ENCODE measurements at regions of chr12 and their contacts with region 1.

Region 1: DNA sequence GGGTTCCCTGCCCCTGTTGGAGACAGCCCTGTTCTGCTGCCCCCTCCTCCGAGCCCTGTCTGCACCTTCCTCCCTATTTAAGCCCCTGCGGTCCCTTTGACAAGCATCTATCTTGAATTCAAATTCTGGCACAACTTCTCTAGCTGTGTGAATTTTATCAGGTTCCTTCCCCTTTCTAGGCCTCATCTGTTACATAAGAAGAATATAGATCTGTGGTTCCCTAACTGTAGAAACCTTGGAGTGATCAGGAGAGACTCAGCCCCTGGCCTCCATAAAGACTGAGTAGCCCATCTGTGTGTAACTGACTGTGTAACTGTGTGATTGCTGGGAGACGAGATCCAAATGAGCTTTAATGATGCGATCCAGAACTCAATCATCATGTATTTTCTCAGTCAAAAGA is 13.0 kb upstream of the RACGAP1 start:
- DNase-seq: no peak
- H3K4me3 ChIP-seq: no peak overlapping the region
- H3K27ac ChIP-seq: no peak overlapping the region
- H3K4me1 ChIP-seq: peaks cover 0 to 16% (median 5%) of the 10 kb centered on the region in 4 experiments
- H3K27me3 ChIP-seq: peaks cover 0 to 5% (median 0%) of the 10 kb centered on the region in 5 experiments

Region 2: GRCh38 chr12:49866859-49867579 is 171.3 kb before region 1 on chr12:
- CTCF ChIA-PET with region 1: interaction called, 15 read pairs
- POLR2A ChIA-PET with region 1: no interaction called
- DNase-seq: peak; percentile 46 to 72 (median 67)
- H3K4me3 ChIP-seq: no peak overlapping the region
- H3K27ac ChIP-seq: no peak overlapping the region
- H3K4me1 ChIP-seq: peaks cover 0 to 32% (median 19%) of the 10 kb centered on the region in 4 experiments
- H3K27me3 ChIP-seq: peaks cover 0 to 12% (median 4%) of the 10 kb centered on the region in 5 experiments

Region 3: DNA sequence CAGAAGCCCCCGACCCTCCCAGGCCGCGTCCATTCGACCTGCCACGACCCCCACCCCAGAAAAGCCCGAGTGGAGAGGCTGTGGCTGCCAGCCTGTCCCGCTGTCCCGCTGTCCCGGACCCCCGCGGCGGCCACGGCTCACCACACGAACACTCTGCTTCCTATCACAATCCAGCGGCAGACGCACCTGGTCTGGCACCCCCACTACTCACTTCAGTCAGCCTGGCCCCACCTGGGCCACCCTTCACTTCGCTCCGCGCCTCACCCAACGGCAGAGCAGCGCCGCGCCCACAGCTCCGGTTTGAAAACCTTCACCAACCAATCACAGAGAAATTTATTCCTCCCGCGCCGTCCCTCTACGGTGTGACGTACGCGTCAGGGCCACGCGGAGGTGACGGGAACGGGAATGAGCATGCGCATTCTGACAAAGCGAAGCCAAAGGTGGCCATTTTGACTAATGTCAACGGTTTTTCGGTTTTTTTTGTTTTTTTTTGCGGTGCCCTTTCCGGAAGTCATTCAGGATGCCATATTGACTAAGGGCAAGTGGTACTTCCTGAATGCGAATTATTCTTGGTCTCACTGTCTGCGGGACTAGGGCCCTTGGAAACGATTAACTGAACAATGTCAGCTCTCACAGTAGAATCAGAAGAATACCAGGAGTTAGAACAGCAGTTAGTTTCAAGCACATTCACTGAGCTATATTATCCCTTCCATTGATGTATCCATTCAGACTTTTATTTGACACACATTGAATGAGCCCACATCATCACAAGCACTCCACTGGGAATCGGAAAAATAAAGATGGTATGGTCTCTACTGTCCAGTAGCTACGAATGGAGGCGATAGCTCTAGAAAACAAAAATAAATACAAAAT is 12.9 kb before region 1 on chr12 and contains the start of gene RACGAP1:
- CTCF ChIA-PET with region 1: interaction called, 17 read pairs
- POLR2A ChIA-PET with region 1: no interaction called
- DNase-seq: peak; percentile 99 to 100 (median 99)
- H3K4me3 ChIP-seq: peak within 1 kb of the TSS; percentile 62 to 98 (median 89)
- H3K27ac ChIP-seq: peak within 1 kb of the TSS in 1 of 2 experiments; percentile 64
- H3K4me1 ChIP-seq: peaks cover 8 to 16% (median 10%) of the 10 kb centered on the region in 4 experiments
- H3K27me3 ChIP-seq: no peaks in the 10 kb centered on the region

Region 4: GRCh38 chr12:50050410-50051098 is 12.2 kb after region 1 on chr12:
- CTCF ChIA-PET with region 1: interaction called, 163 read pairs
- POLR2A ChIA-PET with region 1: no interaction called
- DNase-seq: peak; percentile 89 to 96 (median 93)
- H3K4me3 ChIP-seq: peak overlapping the region in 4 of 7 experiments; percentile 44 to 74 (median 62)
- H3K27ac ChIP-seq: peak overlapping the region in 1 of 2 experiments; percentile 34
- H3K4me1 ChIP-seq: peaks cover 2 to 29% (median 26%) of the 10 kb centered on the region in 4 experiments
- H3K27me3 ChIP-seq: peaks cover 0 to 24% (median 0%) of the 10 kb centered on the region in 5 experiments